BJ (cell line): ENCODE measurements at regions of chr2 and their contacts with region 1.

Region 1: DNA sequence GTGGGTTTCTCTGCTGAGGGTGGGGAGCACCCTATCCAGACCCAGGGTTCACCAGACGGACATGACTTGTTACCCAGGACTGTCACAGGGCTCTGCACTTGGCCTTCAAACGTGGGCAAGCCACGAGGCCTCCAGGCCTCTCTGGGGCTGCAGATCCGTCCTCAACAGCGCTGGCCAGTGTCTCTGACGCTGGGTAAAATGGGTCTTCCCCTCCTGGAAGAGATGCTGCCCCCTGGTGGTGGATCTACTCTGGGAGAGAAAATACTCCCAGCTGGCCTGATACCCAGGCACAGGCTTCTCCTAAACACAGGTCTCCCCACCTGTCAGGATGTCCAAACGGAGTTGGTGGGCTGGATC is 3.7 kb downstream of the GPR17 start:
- DNase-seq: no peak
- H3K4me3 ChIP-seq: no peak overlapping the region
- H3K27me3 ChIP-seq: no peaks in the 10 kb centered on the region
- CTCF ChIP-seq: peak; percentile 87

Region 2: DNA sequence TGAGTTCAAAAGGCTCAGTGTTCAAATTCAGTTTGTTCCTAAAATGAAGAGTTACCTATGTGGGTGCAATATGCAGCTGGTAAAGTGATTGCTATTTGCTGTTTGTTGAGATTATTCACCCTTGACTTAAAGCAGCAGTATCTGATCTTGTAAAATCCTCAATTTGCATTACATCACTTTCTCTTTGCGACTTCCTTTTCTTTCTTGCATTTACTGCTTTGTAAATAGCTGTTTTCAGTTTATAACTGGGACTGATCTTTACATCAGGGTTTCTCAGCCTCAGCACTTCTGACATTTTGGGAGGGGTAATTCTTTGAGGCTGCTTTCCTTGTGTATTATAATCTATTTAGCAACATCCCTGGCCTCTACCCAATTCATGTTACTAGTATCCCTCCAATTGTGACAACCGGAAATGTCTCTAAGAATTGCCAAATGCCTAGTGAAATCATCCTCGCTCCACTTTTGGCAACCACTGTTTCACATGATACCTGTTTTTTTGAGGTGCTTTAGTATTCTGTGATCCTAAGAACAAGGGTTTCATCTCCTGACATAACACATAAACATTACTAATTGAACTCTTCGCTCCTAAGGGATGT is 343.6 kb before region 1 on chr2:
- CTCF ChIA-PET with region 1: no interaction called
- POLR2A ChIA-PET with region 1: no interaction called
- DNase-seq: no peak
- H3K4me3 ChIP-seq: no peak overlapping the region
- H3K27me3 ChIP-seq: no peaks in the 10 kb centered on the region
- CTCF ChIP-seq: no peak

Region 3: DNA sequence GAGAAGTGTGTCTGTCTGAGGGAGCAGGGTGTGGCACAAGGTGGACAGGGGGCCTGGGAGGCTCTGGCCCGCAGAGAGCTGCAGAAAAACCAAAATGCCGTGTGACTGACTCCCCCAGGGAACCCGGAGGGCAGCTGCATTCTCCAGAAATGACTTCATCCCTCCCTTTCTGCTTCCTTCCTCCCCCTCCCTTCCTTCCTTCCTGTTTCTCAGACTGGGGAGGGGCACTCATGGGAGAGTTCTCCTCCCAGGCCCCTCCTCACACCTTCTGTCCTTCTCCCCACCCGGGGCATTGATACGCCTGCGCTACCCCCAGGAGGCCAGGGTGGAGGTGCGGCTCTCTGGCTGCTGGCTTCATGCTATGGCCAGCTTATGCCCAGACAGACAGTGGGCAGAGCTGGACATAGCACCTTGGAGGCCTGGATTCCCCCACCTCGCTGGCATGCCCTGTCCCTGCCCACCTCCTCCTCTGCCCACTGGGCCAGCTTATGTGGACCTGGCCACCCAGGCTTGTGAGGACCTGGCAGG is 11.9 kb before region 1 on chr2:
- CTCF ChIA-PET with region 1: interaction called, 32 read pairs
- POLR2A ChIA-PET with region 1: no interaction called
- DNase-seq: peak; percentile 55
- H3K4me3 ChIP-seq: no peak overlapping the region
- H3K27me3 ChIP-seq: no peaks in the 10 kb centered on the region
- CTCF ChIP-seq: no peak

Region 4: DNA sequence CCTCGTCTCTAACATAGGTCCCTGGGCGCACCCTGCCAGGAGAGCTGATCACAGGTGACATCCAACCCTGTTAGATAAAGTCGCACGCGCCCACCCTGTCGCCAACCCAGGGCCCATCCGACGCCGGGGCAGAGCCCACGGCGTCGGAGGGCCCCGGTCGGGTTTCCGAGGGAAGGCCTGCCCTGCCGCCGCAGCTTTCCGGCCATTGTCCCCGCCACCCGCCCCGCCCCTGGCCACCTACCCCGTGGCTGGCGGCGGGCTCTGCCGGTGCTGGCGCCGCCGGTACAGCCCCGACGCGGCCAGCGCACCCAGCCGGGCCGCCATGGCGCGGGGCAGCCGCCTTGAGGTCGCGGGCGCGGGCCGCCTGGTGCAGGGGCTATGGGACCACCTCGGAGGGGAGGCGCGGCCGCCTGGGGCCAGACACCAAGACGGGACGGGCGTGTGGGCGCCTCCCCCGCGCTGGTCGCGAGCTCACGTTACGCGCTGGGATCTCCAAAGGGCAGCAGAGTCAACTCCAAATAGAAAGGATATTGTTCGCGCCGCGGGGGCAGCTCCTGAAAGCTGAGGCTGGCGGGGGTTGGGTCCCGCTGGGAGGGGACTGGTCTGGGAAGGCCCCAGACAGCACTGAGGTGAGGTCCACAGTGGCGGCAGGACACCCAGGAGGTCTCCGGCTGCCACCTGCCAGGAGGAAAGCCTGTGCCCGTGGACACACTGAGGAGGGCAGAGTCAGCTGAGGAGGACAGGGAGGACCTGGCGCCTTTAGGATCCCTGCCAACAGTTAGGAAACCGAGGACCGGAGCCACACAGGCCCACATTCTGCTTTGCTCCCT is 14.6 kb after region 1 on chr2:
- CTCF ChIA-PET with region 1: interaction called, 13 read pairs
- POLR2A ChIA-PET with region 1: no interaction called
- DNase-seq: no peak
- H3K4me3 ChIP-seq: peak overlapping the region; percentile 14; the same call in 1 of the 2 replicates
- H3K27me3 ChIP-seq: no peaks in the 10 kb centered on the region
- CTCF ChIP-seq: no peak

Region 5: GRCh38 chr2:127675331-127676261 is 25.9 kb after region 1 on chr2 and contains the start of gene LIMS2:
- CTCF ChIA-PET with region 1: interaction called, 17 read pairs
- POLR2A ChIA-PET with region 1: no interaction called
- DNase-seq: peak; percentile 37
- H3K4me3 ChIP-seq: peak within 1 kb of the TSS; percentile 60
- H3K27me3 ChIP-seq: peaks cover 12% of the 10 kb centered on the region
- CTCF ChIP-seq: peak; percentile 26; the same call in 1 of the 2 replicates
- polyA plus RNA-seq, gene LIMS2: 33.2 and 46.1 TPM in 2 replicates